H1 (cell line): ENCODE measurements at regions of chr1 and their contacts with region 1.

Region 1: GRCh38 chr1:31617917-31618660 is 600 bp downstream of the HCRTR1 start:
- DNase-seq: peak in 1 of 2 experiments; percentile 88
- H3K4me3 ChIP-seq: peak overlapping the region; percentile 57 to 88 (median 64)
- H3K27ac ChIP-seq: no peak overlapping the region
- H3K4me1 ChIP-seq: peaks cover 2 to 11% (median 7%) of the 10 kb centered on the region in 4 experiments; a peak in 5 of 7 replicates
- H3K27me3 ChIP-seq: peaks cover 6 to 22% (median 16%) of the 10 kb centered on the region in 4 experiments
- CTCF ChIP-seq: peak; percentile 70 to 83 (median 74)
- EP300 ChIP-seq: no peak
- POLR2A ChIP-seq: no peak
- RAD21 ChIP-seq: peak; percentile 46 to 59; a peak in 3 of 4 replicates

Region 2: DNA sequence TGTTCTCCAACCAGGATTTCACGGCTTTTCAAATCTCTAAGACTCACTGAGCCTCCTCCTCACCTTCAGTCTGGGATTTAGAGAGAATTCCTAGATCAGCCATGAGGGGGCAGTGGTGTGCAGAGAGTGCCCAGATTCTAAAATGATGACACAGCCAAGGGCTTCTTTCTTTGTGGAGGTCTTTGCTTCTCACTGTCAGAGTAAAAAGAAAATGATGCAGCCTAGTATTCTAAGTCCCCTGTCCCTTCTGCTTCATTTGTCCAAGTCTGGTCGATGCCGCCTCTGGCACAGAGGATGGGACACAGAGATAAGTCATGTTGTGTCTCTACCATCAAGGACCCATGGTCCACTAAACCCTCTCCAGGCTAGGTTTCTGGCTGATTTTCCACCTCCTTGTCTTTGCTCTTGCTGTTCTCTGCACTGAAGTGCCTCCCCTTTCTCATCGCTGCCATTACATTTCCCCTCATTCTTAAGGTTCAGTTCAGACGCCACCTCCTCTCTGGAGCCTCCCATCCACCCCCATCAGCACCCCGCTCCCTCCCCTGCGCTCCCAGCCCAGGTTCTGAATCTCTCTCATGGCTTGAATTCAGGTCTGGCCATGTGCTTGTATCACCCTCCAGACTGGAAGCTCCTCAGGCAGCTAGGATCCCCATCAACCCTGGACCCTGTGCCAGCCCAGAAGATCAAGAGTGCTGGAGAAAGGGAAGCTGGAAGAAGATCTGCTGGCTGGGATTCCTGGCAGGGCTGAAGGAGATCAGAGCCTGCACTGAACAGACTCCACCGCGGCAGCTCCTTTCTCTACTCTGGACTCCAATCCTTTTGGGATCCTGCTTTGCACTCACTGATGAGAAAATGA is 53.7 kb before region 1 on chr1:
- CTCF ChIA-PET with region 1: interaction called, 24 read pairs
- POLR2A ChIA-PET with region 1: no interaction called
- DNase-seq: peak in 1 of 2 experiments; percentile 94
- H3K4me3 ChIP-seq: no peak overlapping the region
- H3K27ac ChIP-seq: no peak overlapping the region
- H3K4me1 ChIP-seq: peaks cover 0 to 9% (median 6%) of the 10 kb centered on the region in 4 experiments; a peak in 5 of 7 replicates
- H3K27me3 ChIP-seq: no peaks in the 10 kb centered on the region
- CTCF ChIP-seq: peak; percentile 23 to 83 (median 80)
- EP300 ChIP-seq: no peak
- POLR2A ChIP-seq: no peak
- RAD21 ChIP-seq: peak; percentile 89 to 91

Region 3: GRCh38 chr1:31577515-31578192 is 40.4 kb before region 1 on chr1:
- CTCF ChIA-PET with region 1: interaction called, 10 read pairs
- POLR2A ChIA-PET with region 1: no interaction called
- DNase-seq: peak in 1 of 2 experiments; percentile 42
- H3K4me3 ChIP-seq: no peak overlapping the region
- H3K27ac ChIP-seq: no peak overlapping the region
- H3K4me1 ChIP-seq: peaks cover 10 to 49% (median 30%) of the 10 kb centered on the region in 4 experiments
- H3K27me3 ChIP-seq: peaks cover 0 to 2% (median 0%) of the 10 kb centered on the region in 4 experiments; a peak in 1 of 7 replicates
- CTCF ChIP-seq: no peak
- EP300 ChIP-seq: no peak
- POLR2A ChIP-seq: no peak
- RAD21 ChIP-seq: no peak

Region 4: DNA sequence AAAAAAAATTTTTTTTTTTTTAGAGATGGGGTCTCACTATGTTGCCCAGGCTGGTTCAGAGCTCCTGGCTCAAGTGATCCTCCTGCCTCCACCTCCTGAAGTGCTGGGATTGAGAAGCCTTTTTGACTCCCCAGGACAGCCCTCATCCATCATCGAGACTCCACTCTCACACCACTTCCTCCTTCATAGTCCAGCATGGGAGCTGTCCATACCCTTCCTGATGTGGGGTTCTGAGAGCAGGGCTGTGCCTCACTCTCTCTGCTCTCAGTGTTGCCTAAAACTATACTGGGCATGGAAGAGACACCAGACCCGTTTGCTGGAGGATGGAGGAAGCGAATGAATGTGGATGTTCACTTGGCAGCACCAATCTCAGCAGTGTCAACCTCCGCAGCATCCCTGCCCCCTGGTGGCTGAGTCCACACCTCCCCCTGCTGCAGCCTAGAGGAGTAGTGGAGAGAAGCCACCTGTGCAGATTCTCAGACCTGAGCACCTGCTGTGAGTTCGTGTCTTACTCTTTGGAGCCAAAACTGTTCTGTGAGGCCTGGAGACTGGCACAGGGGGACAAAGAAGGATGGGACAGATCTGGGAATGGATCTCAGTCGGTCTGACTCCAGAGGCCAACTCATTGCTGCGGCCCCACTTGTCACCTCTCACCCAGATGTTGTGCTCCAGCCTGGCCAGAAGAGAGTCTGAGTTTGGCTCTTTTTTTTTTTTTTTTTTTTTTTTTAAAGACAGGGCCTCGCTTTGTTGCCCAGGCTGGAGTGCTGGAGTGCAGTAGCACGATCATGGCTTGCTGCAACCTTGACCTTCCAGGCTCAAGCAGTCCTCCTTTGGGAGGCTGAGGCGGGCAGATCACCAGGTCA is 24.1 kb before region 1 on chr1:
- CTCF ChIA-PET with region 1: interaction called, 10 read pairs
- POLR2A ChIA-PET with region 1: no interaction called
- DNase-seq: peak; percentile 62 to 96
- H3K4me3 ChIP-seq: no peak overlapping the region
- H3K27ac ChIP-seq: no peak overlapping the region
- H3K4me1 ChIP-seq: peaks cover 0 to under 1% (median 0%) of the 10 kb centered on the region in 4 experiments; a peak in 2 of 7 replicates
- H3K27me3 ChIP-seq: peaks cover 0 to 1% (median under 1%) of the 10 kb centered on the region in 4 experiments; a peak in 1 of 7 replicates
- CTCF ChIP-seq: peak; percentile 96 to 100 (median 99)
- EP300 ChIP-seq: no peak
- POLR2A ChIP-seq: no peak
- RAD21 ChIP-seq: peak; percentile 87 to 91

Region 5: GRCh38 chr1:31605908-31606427 is 12.1 kb before region 1 on chr1:
- CTCF ChIA-PET with region 1: interaction called, 10 read pairs
- POLR2A ChIA-PET with region 1: interaction called, 3 read pairs
- DNase-seq: no peak
- H3K4me3 ChIP-seq: no peak overlapping the region
- H3K27ac ChIP-seq: no peak overlapping the region
- H3K4me1 ChIP-seq: no peaks in the 10 kb centered on the region
- H3K27me3 ChIP-seq: no peaks in the 10 kb centered on the region
- CTCF ChIP-seq: no peak
- EP300 ChIP-seq: no peak
- POLR2A ChIP-seq: no peak
- RAD21 ChIP-seq: no peak

Region 6: GRCh38 chr1:31633053-31633452 is 15.0 kb after region 1 on chr1:
- CTCF ChIA-PET with region 1: interaction called, 40 read pairs
- POLR2A ChIA-PET with region 1: interaction called, 4 read pairs
- DNase-seq: peak in 1 of 2 experiments; percentile 85
- H3K4me3 ChIP-seq: no peak overlapping the region
- H3K27ac ChIP-seq: no peak overlapping the region
- H3K4me1 ChIP-seq: no peaks in the 10 kb centered on the region
- H3K27me3 ChIP-seq: no peaks in the 10 kb centered on the region
- CTCF ChIP-seq: peak; percentile 71 to 88 (median 84)
- EP300 ChIP-seq: no peak
- POLR2A ChIP-seq: no peak
- RAD21 ChIP-seq: peak; percentile 51 to 61

Region 7: GRCh38 chr1:31639543-31639942 is 21.5 kb after region 1 on chr1:
- CTCF ChIA-PET with region 1: interaction called, 40 read pairs
- POLR2A ChIA-PET with region 1: interaction called, 8 read pairs
- DNase-seq: no peak
- H3K4me3 ChIP-seq: no peak overlapping the region
- H3K27ac ChIP-seq: no peak overlapping the region
- H3K4me1 ChIP-seq: peaks cover 3 to 14% (median 6%) of the 10 kb centered on the region in 4 experiments; a peak in 4 of 7 replicates
- H3K27me3 ChIP-seq: no peaks in the 10 kb centered on the region
- CTCF ChIP-seq: no peak
- EP300 ChIP-seq: no peak
- POLR2A ChIP-seq: no peak
- RAD21 ChIP-seq: no peak

Region 8: DNA sequence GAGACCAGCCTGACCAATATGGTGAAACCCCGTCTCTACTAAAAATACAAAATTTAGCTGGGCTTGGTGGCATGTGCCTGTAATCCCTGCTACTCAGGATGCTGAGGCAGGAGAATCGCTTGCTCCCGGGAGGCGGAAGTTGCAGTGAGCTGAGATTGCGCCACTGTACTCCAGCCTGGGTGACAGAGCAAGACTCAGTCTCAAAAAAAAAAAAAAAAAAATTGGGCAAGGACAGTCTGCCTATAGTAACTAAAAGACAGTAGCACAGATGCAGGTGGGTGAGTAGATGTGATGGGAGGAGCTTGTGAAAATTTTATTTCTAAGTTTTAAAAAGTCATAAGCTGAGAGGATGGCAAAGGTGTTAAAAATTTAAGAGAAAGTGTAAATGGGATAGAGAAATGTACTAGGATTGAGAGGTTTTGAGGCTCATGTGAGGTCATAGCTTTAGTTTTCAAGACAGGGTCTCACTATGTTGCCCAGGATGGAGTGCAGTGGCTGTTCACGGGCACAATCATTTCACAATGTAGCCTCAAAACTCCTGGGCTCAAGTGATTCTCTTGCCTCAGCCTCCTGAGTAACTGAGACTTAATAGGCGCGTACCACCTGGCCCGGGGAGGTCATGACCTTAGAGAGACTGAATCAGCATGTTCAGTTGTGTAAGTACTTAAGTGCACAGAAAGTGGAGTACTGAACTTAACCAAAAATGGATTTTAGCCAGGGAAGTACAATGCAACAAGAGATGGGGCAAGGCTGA is 286.4 kb after region 1 on chr1:
- CTCF ChIA-PET with region 1: no interaction called
- POLR2A ChIA-PET with region 1: no interaction called
- DNase-seq: no peak
- H3K4me3 ChIP-seq: no peak overlapping the region
- H3K27ac ChIP-seq: no peak overlapping the region
- H3K4me1 ChIP-seq: no peaks in the 10 kb centered on the region
- H3K27me3 ChIP-seq: no peaks in the 10 kb centered on the region
- CTCF ChIP-seq: no peak
- EP300 ChIP-seq: no peak
- POLR2A ChIP-seq: no peak
- RAD21 ChIP-seq: no peak